A673 (cell line): ENCODE measurements at regions of chr6 and their contacts with region 1.

Region 1: GRCh38 chr6:19289457-19289856 is 547.7 kb upstream of the ID4 start:
- DNase-seq: no peak
- H3K4me3 ChIP-seq: no peak overlapping the region
- H3K27ac ChIP-seq: no peak overlapping the region
- H3K4me1 ChIP-seq: no peaks in the 10 kb centered on the region
- H3K27me3 ChIP-seq: no peaks in the 10 kb centered on the region
- CTCF ChIP-seq: no peak

Region 2: DNA sequence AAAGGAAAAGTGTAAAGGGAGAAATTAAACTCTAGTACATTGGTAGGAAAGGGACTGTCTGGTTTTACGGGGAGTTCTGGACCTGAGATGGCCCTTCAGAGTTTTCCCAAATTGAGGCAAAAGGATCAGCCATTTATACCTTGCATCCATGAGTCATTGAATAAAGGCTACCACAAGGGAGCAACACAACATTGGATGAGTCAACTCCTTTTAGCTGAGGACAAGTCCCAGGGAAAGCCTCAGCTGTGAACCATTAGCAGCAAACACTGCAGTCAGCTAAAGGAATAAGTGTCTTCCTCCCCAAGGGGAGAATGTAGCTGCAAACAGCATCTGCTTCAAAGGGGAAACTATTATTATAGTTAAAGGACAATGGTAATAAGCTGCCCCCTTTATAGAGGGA is 79.1 kb after region 1 on chr6:
- CTCF ChIA-PET with region 1: no interaction called
- POLR2A ChIA-PET with region 1: no interaction called
- intact Hi-C with region 1: no loop called
- DNase-seq: peak; percentile 14
- H3K4me3 ChIP-seq: no peak overlapping the region
- H3K27ac ChIP-seq: no peak overlapping the region
- H3K4me1 ChIP-seq: no peaks in the 10 kb centered on the region
- H3K27me3 ChIP-seq: no peaks in the 10 kb centered on the region
- CTCF ChIP-seq: no peak

Region 3: DNA sequence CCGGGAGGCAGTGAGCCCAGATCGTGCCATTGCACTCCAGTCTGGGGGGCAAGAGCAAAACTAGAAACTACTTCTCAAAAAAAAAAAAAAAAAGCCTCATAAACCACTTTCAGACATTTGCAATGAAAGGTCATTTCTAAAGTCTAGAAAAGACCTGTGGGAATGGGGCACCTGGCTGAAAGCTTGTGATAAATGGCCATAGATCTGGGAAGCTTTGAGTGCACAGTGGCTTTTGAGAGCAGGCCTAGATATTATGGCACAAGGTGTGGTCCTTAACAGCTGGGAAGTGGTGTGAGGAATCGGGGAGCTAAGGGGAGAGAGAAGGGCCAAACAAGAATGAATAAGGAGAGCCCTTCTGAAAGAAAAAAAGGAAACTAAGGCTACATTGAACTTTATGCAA is 580.9 kb after region 1 on chr6:
- CTCF ChIA-PET with region 1: no interaction called
- POLR2A ChIA-PET with region 1: interaction called, 12 read pairs
- intact Hi-C with region 1: no loop called
- DNase-seq: no peak
- H3K4me3 ChIP-seq: no peak overlapping the region
- H3K27ac ChIP-seq: no peak overlapping the region
- H3K4me1 ChIP-seq: no peaks in the 10 kb centered on the region
- H3K27me3 ChIP-seq: no peaks in the 10 kb centered on the region
- CTCF ChIP-seq: no peak